ENCODE measurements at regions of chr2 and their contacts with region 1.

Region 1: DNA sequence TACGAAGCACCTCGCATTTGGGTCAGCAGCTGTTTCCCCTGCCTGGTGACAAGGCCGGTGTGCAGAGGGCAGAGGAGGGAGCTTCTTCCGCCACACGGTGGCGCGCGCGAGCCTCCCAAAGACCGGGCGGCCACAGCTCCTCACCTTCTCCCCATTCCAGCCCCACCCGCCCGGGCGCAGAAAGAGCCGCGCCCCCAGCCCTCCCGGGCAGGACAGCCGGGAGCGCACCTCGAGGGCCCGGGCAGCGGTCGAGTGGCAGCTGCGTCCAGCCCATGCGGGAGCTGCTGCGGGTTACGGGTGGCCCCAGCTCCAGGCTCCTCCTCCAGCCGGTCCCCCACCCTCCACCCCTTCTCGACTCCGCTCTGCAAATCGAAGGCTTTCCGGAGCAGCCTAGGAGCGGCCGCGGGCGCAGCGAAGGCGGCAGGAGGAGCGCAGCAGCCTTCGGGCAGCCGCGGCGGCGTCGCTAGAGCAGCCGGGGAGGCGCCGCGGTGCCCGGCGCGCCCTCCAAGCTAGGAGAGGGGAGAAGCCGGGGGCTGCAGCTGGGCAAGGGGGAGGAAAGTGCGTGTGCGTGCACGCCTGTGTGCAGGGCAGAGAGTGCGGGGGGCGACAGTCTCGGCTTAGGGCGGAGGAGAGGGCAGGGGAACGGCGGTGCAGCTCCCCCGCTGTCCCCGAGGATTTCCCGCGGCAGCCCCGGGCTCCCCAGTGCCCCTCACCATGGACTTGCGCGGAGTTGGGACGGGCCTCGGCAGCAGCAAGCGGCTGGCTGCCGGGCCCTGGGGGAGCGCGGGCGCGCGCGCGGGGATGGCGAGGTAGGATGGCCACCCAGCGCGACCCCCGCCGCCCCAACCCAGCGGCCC is at the start of gene CCDC85A:
- DNase-seq: peak; percentile 88
- H3K4me3 ChIP-seq: peak within 1 kb of the TSS; percentile 76
- H3K27ac ChIP-seq: no peak within 1 kb of the TSS
- H3K4me1 ChIP-seq: no peaks in the 10 kb centered on the region
- H3K27me3 ChIP-seq: peaks cover 24% of the 10 kb centered on the region; the same call in 1 of the 2 replicates
- total RNA-seq, gene CCDC85A: 4.2 and 9.9 TPM in 2 replicates

Region 2: DNA sequence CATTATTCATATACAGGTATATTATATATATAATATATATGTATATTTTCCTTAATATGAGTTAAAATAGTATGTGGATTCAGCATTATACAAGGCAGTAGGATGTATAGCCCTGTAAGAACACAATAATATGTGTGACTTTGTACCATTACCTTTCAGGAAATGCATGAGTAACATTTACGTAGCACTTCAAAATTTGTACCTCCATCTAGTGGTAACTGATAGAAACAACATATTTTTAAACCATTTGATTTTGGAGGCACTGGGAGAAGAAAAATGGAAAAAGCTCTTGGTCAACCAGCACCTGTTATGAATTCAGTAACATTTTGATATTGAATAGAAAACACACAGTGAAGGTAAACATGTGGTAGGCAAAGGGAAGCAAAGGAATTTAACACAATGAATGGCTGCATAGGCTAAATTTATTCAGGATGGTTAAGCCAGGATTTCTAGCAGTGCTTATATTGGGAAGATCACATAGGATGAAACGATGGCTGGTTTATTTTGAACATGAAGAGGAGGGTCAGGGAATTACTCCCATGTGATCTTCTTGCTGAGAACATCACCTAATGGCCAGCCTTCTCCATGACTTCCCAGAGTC is 565.4 kb after region 1 on chr2:
- in situ Hi-C with region 1: loop called (anchors 10 kb)
- DNase-seq: peak; percentile 58
- H3K4me3 ChIP-seq: no peak overlapping the region
- H3K27ac ChIP-seq: no peak overlapping the region
- H3K4me1 ChIP-seq: no peaks in the 10 kb centered on the region
- H3K27me3 ChIP-seq: no peaks in the 10 kb centered on the region

Region 3: GRCh38 chr2:57497489-57498096 is 1313.7 kb after region 1 on chr2:
- in situ Hi-C with region 1: loop called (anchors 10 kb)
- DNase-seq: peak; percentile 81
- H3K4me3 ChIP-seq: no peak overlapping the region
- H3K27ac ChIP-seq: no peak overlapping the region
- H3K4me1 ChIP-seq: no peaks in the 10 kb centered on the region
- H3K27me3 ChIP-seq: no peaks in the 10 kb centered on the region; the same call in 1 of the 2 replicates